Posterior vena cava (tissue), 2 donors: ENCODE measurements at regions of chr3 and their contacts with region 1.

Region 1: GRCh38 chr3:188262913-188263683 is 109.1 kb downstream of the LPP start:
- DNase-seq: no peak

Region 2: DNA sequence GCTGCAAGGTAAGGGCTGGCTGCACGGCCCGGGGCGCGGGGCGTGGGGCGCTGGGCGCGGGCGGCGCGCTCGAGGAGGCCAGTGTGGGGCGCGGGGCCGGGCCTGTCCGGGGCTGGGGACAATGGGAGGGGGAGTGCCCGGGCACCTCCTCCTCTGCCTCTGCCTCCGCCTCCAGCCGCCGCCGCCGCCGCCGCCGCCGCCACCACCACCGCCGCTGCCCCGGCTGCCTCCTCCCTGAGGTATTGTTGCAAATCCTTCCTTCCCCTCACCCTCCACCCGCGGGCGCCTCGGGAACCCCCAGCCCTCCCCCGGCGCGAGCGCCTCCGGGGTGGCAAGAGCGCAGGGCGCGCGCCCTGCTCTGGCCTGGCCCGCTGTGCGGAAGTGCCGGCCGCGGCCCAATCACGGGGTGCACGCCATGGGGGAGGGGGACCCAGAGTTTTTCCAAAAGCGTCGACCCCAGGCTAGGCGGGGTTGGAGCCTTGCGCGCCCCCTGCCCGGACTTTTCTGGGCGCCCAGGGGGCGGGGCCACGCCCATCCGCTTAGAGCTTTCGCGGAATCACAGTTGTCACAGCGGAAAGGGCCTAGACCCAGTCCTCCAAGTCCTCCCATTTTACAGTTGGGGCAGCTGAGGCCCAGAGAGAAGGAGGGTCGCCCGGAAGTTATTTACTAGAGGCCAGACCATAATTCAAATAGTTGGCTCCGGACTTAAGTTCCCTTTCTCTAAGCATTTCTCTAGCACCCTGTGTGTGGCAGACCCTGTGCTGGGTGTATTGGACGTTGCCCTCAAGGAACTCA is 108.9 kb before region 1 on chr3 and contains the start of gene LPP:
- intact Hi-C with region 1: loop called in 1 of 2 experiments (anchors 10 kb)
- DNase-seq: no peak
- total RNA-seq, gene LPP: 1,601 to 1,705 TPM

Region 3: GRCh38 chr3:188170461-188171459 is 92.3 kb before region 1 on chr3:
- intact Hi-C with region 1: no loop called
- DNase-seq: no peak